ENCODE measurements at regions of chr13 and their contacts with region 1.

Region 1: DNA sequence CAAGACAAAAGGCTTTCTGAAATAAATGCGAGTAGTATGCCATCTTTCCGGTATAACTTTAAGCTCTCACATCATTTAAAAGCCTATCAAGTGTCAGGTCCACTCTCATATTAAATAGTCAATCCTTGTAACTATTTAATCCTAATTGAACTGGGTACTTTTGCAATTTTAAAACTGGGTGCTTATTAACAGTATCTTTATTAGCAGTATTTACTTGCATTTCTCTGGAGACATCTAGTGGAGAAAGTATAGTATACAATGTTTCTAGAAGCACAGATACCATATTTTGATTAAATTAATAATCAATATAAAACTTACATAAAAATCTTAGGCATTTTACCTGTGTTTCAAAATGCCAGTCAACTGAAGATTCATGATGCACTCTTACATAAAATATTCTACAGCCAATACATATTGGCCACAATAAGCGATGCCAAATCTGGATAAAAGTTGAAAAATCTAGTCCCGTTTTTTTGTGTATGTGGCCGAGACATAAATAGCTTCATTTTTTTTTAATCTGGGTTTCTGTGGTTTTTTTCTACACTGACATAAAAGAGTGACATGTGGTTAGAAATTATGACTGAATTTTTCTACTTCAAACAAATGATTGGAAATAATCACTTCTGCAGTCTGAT is 4.3 kb upstream of the POSTN start:
- DNase-seq: no peak
- H3K4me3 ChIP-seq: no peak overlapping the region
- H3K27ac ChIP-seq: no peak overlapping the region
- H3K4me1 ChIP-seq: no peaks in the 10 kb centered on the region
- H3K27me3 ChIP-seq: no peaks in the 10 kb centered on the region
- CTCF ChIP-seq: peak; percentile 20 to 45 (median 29)
- POLR2A ChIP-seq: no peak

Region 2: DNA sequence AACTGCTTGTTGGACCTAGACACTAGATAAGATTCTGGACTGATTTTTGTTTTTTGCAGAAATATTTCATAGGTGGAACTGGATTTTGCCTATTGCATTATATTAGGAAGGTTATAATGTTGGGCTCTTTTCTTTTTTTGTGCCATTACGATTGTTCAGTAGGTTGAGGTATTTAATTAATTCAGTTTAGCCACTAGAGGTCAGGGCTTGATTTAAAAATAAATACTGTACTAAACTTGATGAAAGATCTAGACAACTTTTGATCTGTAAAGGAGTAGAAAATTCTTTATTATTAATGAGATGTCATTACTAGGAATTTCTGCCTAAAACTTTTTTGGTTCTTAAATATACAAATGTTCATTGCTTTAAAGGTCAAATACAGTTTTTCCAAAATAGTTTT is 528.2 kb before region 1 on chr13:
- intact Hi-C with region 1: loop called (anchors 10 kb)
- DNase-seq: no peak
- H3K4me3 ChIP-seq: no peak overlapping the region
- H3K27ac ChIP-seq: no peak overlapping the region
- H3K4me1 ChIP-seq: no peaks in the 10 kb centered on the region
- H3K27me3 ChIP-seq: no peaks in the 10 kb centered on the region
- CTCF ChIP-seq: peak in 1 of 3 experiments; percentile 17
- POLR2A ChIP-seq: no peak